Esophagus squamous epithelium (tissue), 5 donors: ENCODE measurements at regions of chr15 and their contacts with region 1.

Region 1: GRCh38 chr15:93485438-93486327 is 396.7 kb upstream of the RGMA start:
- DNase-seq: no peak
- H3K4me3 ChIP-seq: no peak overlapping the region
- H3K27ac ChIP-seq: peak overlapping the region; percentile 64 to 83 (median 74)
- H3K4me1 ChIP-seq: peaks cover 12 to 76% (median 16%) of the 10 kb centered on the region in 3 donors
- H3K27me3 ChIP-seq: no peaks in the 10 kb centered on the region
- CTCF ChIP-seq: peak in 2 of 6 experiments; percentile 17 to 46
- POLR2A ChIP-seq: no peak

Region 2: GRCh38 chr15:93164409-93164808 is 321.3 kb before region 1 on chr15:
- intact Hi-C with region 1: no loop called
- DNase-seq: no peak
- H3K4me3 ChIP-seq: no peak overlapping the region
- H3K27ac ChIP-seq: no peak overlapping the region
- H3K4me1 ChIP-seq: no peaks in the 10 kb centered on the region
- H3K27me3 ChIP-seq: peaks cover 0 to 10% (median 0%) of the 10 kb centered on the region in 4 donors
- CTCF ChIP-seq: no peak
- POLR2A ChIP-seq: no peak

Region 3: GRCh38 chr15:93566762-93567161 is 81.1 kb after region 1 on chr15:
- intact Hi-C with region 1: loop called (anchors 10 kb)
- DNase-seq: no peak
- H3K4me3 ChIP-seq: no peak overlapping the region
- H3K27ac ChIP-seq: peak overlapping the region; percentile 46 to 79 (median 69)
- H3K4me1 ChIP-seq: peaks cover 0 to 42% (median 9%) of the 10 kb centered on the region in 3 donors
- H3K27me3 ChIP-seq: no peaks in the 10 kb centered on the region
- CTCF ChIP-seq: peak in 2 of 6 experiments; percentile 56 to 63
- POLR2A ChIP-seq: no peak